ENCODE measurements at regions of chr11 and their contacts with region 1.

Region 1: DNA sequence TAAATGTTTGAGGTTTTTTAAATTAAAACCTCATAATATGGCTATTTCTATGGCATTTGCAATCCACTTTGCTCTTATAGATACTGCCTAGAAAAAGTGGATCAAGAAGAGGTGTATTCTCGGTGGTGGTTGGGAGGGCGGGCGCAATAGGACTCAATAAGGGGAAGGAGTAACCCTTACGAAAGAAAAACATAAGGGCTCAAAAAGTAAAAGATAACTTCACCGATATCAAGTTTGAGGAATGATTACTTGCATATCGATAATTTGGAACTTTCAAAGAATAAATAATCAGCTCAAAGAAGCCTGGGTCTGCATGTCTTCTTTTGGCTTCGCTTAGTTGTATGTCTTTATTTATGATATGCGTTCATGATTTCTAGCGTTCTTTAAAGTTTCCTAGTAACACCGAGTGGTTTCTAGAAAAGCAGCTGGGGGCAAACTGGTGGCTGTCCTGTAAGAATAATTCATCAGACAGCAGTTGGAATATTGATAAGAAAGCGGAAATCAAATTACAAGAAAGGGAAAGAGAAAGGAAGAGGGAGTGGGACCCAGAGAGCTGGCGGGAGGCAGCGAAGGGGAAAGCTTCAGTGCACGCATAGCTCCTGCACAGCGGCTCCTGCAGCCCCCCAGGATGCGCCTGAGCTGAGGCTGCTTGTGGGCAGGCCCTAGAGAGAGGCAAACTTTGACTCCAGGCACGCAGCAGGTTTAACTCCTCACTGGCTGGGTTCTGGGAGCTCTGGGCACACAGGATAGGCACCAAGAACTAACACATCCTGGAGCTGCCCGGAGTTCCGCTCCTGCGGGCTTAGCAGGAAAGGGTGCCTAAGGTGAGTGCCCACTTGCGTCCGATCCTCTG is 9.1 kb upstream of the FLI1 start:
- DNase-seq: no peak
- H3K4me3 Mint-ChIP-seq: no peak overlapping the region
- H3K27ac Mint-ChIP-seq: no peak overlapping the region
- H3K4me1 Mint-ChIP-seq: peaks cover 34% of the 10 kb centered on the region
- H3K27me3 Mint-ChIP-seq: peaks cover 63% of the 10 kb centered on the region

Region 2: GRCh38 chr11:127919206-127920000 is 765.4 kb before region 1 on chr11:
- intact Hi-C with region 1: no loop called
- DNase-seq: no peak
- H3K4me3 Mint-ChIP-seq: no peak overlapping the region
- H3K27ac Mint-ChIP-seq: no peak overlapping the region
- H3K4me1 Mint-ChIP-seq: no peaks in the 10 kb centered on the region
- H3K27me3 Mint-ChIP-seq: peaks cover 2% of the 10 kb centered on the region

Region 3: DNA sequence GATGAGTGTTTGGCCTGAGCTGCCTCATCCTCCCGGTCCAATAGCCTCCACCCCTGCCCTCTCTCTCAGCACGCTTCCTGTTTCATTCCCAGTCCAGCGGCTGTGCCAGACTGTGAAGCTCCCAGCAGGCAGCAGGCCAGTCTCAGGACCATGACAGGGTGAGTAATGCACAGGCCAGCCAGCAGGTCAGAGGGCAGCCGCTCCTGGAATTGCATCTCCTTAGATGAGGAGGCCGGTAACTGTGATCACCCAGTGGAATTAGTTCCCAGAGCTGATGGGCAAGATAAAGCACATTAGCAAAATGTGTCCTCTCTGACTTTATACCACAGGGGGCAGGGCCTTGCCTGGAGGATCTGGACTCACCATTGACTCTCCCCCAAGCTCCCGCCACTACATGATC is 348.6 kb before region 1 on chr11:
- intact Hi-C with region 1: no loop called
- DNase-seq: no peak
- H3K4me3 Mint-ChIP-seq: no peak overlapping the region
- H3K27ac Mint-ChIP-seq: no peak overlapping the region
- H3K4me1 Mint-ChIP-seq: peaks cover 74% of the 10 kb centered on the region
- H3K27me3 Mint-ChIP-seq: no peaks in the 10 kb centered on the region

Region 4: DNA sequence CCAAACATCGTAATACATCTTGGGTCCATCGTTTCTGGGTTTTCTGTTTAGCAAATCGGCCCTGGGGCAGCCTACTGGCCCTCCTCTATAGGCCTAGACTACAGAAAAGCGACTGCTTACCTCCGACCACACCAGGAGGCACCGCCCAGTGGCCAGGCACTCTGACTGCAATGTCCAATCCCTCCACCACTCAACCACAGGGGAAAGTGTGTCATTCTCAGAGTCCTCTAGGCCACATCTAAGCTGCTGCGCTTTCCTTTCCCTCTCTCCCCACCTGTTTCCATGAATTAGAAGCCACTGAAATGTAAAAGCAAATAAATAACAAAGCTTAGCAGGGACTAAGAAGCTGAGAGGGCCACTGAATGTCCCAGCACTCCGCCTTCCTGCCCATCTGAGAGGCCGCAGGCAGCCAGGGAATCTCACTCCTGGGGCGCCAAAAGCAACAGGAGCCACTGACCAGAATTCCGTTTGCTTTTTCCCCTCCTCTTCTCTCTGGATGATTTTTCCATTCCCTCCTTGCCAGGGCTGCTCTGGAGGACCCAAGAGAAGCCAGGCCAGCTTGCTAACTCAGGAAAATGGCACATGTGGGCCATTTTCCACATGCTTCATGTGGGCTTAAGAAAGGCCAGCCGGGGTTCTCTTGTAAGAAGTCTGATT is 41.0 kb before region 1 on chr11:
- intact Hi-C with region 1: loop called (anchors 5 kb)
- DNase-seq: no peak
- H3K4me3 Mint-ChIP-seq: no peak overlapping the region
- H3K27ac Mint-ChIP-seq: no peak overlapping the region
- H3K4me1 Mint-ChIP-seq: no peaks in the 10 kb centered on the region
- H3K27me3 Mint-ChIP-seq: peaks cover 14% of the 10 kb centered on the region

Measured in activated T-helper 1 cell treated with anti-CD3 and anti-CD28 coated beads, Interleukin-12 subunit alpha, Interleukin-12 subunit beta, Interleukin-2, Interleukin-4 antibody, amounts not matched to agents 30 ng/mL and 10 ng/mL and 1 ng/mL, durations not matched to agents 14 hours and 24 hours and 36 hours (primary cell).